GM12878 (cell line): ENCODE measurements at regions of chr4 and their contacts with region 1.

Region 1: GRCh38 chr4:185096032-185096653 is 46.9 kb upstream of the SLC25A4 start:
- DNase-seq: no peak
- ATAC-seq: peak; percentile 56; the same call in 2 of the 3 replicates
- H3K4me3 ChIP-seq: no peak overlapping the region
- H3K27ac ChIP-seq: no peak overlapping the region
- H3K4me1 ChIP-seq: no peaks in the 10 kb centered on the region
- H3K27me3 ChIP-seq: peaks cover 2 to 3% of the 10 kb centered on the region in 2 experiments; a peak in 1 of 4 replicates
- CTCF ChIP-seq: peak; percentile 34 to 54 (median 42); a peak in 5 of 6 replicates
- EP300 ChIP-seq: no peak
- POLR2A ChIP-seq: no peak
- RAD21 ChIP-seq: peak; percentile 74

Region 2: GRCh38 chr4:184983672-184984356 is 112.3 kb before region 1 on chr4:
- CTCF ChIA-PET with region 1: no interaction called
- POLR2A ChIA-PET with region 1: no interaction called
- RAD21 ChIA-PET with region 1: no interaction called
- SMC1A ChIA-PET with region 1: no interaction called
- in situ Hi-C with region 1: no loop called
- intact Hi-C with region 1: no loop called
- DNase-seq: peak; percentile 24
- ATAC-seq: peak; percentile 90
- H3K4me3 ChIP-seq: no peak overlapping the region
- H3K27ac ChIP-seq: no peak overlapping the region
- H3K4me1 ChIP-seq: 0 out of 2 replicates have a peak, but pooled peaks cover 4% of the 10 kb centered on the region
- H3K27me3 ChIP-seq: peaks cover 0 to 3% of the 10 kb centered on the region in 2 experiments; a peak in 3 of 4 replicates
- CTCF ChIP-seq: peak; percentile 44 to 62 (median 47)
- EP300 ChIP-seq: no peak
- POLR2A ChIP-seq: no peak
- RAD21 ChIP-seq: peak; percentile 87

Region 3: DNA sequence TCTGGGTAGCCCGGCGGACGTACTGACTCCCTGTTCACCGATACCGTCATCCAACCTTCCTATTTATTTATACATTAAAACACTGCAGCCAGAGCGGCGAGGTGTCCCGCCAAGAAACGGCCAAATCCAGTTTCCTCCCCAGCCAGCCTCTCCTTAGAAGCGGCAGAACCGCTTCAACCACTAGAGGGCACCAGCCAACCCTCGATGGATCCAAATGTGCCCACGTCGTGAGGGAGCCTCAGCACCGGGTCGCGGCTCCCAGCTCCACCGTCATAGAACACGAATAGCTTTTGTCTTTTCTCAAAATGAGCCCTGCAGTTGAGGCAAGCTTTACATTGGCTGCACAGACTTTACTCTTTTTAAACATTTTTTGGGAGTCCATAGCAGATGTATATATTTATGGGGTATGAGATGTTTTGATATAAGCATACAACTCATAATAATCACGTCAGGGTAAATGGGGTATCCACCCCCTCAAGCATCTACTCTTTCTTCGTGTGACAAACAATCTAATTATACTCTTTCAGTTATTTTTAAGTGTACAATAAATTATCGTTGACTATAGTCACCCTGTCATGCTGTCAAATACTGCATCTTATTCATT is 90.8 kb before region 1 on chr4:
- CTCF ChIA-PET with region 1: interaction called, 22 read pairs
- POLR2A ChIA-PET with region 1: no interaction called
- RAD21 ChIA-PET with region 1: interaction called, 18 read pairs
- SMC1A ChIA-PET with region 1: interaction called, 8 read pairs
- in situ Hi-C with region 1: no loop called
- intact Hi-C with region 1: loop called (anchors 2 kb)
- DNase-seq: peak; percentile 8
- ATAC-seq: peak; percentile 99
- H3K4me3 ChIP-seq: no peak overlapping the region
- H3K27ac ChIP-seq: no peak overlapping the region
- H3K4me1 ChIP-seq: no peaks in the 10 kb centered on the region
- H3K27me3 ChIP-seq: peaks cover 3 to 5% of the 10 kb centered on the region in 2 experiments; a peak in 2 of 4 replicates
- CTCF ChIP-seq: peak; percentile 89 to 94 (median 94)
- EP300 ChIP-seq: no peak
- POLR2A ChIP-seq: no peak
- RAD21 ChIP-seq: peak; percentile 87

Region 4: GRCh38 chr4:185033950-185034349 is 62.2 kb before region 1 on chr4:
- CTCF ChIA-PET with region 1: interaction called, 14 read pairs
- POLR2A ChIA-PET with region 1: no interaction called
- RAD21 ChIA-PET with region 1: interaction called, 3 read pairs
- SMC1A ChIA-PET with region 1: interaction called, 5 read pairs
- in situ Hi-C with region 1: no loop called
- intact Hi-C with region 1: loop called (anchors 2 kb)
- DNase-seq: peak; percentile 9
- ATAC-seq: peak; percentile 82
- H3K4me3 ChIP-seq: no peak overlapping the region
- H3K27ac ChIP-seq: no peak overlapping the region
- H3K4me1 ChIP-seq: no peaks in the 10 kb centered on the region
- H3K27me3 ChIP-seq: no peaks in the 10 kb centered on the region; a peak in 2 of 4 replicates
- CTCF ChIP-seq: no peak
- EP300 ChIP-seq: no peak
- POLR2A ChIP-seq: no peak
- RAD21 ChIP-seq: no peak

Region 5: GRCh38 chr4:185082561-185082960 is 13.6 kb before region 1 on chr4:
- CTCF ChIA-PET with region 1: interaction called, 13 read pairs
- POLR2A ChIA-PET with region 1: no interaction called
- RAD21 ChIA-PET with region 1: interaction called, 3 read pairs
- SMC1A ChIA-PET with region 1: interaction called, 7 read pairs
- in situ Hi-C with region 1: no loop called
- intact Hi-C with region 1: no loop called
- DNase-seq: no peak
- ATAC-seq: no peak
- H3K4me3 ChIP-seq: no peak overlapping the region
- H3K27ac ChIP-seq: no peak overlapping the region
- H3K4me1 ChIP-seq: no peaks in the 10 kb centered on the region
- H3K27me3 ChIP-seq: peaks cover 0 to 8% of the 10 kb centered on the region in 2 experiments; a peak in 1 of 4 replicates
- CTCF ChIP-seq: no peak
- EP300 ChIP-seq: no peak
- POLR2A ChIP-seq: no peak
- RAD21 ChIP-seq: no peak

Region 6: DNA sequence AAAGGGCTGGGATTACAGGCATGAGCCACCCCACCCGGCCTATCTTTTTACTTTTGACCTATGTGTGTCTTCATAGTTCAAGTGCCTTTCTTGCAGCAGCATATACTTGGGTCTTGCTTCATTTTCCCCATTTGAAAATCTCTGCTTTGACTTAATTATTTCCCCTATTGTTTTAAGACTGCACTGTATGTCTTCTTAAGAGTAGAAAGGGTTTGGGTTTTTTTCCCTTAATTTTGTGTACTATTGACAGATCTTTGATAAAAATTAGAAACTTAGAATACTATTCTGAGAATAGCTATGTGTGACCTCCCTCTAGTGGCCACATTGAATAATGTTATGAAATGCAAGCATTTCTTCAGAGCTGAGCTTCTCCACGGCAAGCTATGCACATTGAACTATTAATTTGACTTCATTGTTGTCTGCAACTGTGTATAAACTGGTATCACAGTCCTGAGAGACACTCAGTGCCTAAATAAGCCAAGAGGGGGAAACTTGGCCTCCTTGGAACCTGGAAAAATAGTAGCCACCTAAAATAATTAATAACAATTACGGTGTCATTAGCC is 38.2 kb after region 1 on chr4:
- CTCF ChIA-PET with region 1: interaction called, 13 read pairs
- POLR2A ChIA-PET with region 1: no interaction called
- RAD21 ChIA-PET with region 1: interaction called, 9 read pairs
- SMC1A ChIA-PET with region 1: interaction called, 10 read pairs
- in situ Hi-C with region 1: no loop called
- intact Hi-C with region 1: no loop called
- DNase-seq: no peak
- ATAC-seq: peak; percentile 91
- H3K4me3 ChIP-seq: no peak overlapping the region
- H3K27ac ChIP-seq: no peak overlapping the region
- H3K4me1 ChIP-seq: no peaks in the 10 kb centered on the region
- H3K27me3 ChIP-seq: no peaks in the 10 kb centered on the region; a peak in 1 of 4 replicates
- CTCF ChIP-seq: peak; percentile 69 to 83 (median 81)
- EP300 ChIP-seq: no peak
- POLR2A ChIP-seq: no peak
- RAD21 ChIP-seq: peak; percentile 79

Region 7: DNA sequence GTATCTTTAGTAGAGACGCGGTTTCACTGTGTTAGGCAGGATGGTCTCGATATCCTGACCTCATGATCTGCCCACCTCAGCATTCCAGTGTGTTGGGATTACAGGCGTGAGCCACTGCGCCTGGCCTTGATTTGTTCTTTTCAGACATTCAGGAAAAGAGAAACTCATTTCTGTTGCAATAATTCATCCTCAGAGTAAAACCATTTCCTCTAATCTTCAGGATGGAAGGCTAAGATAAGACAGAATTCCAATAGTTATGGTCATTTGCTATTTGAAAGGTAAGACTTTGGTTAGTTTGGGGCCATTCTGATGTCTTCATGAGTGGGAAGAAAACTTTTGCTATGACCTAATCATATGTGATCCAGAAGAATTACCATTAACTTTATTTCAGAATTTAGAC is 216.6 kb after region 1 on chr4:
- CTCF ChIA-PET with region 1: no interaction called
- POLR2A ChIA-PET with region 1: no interaction called
- RAD21 ChIA-PET with region 1: no interaction called
- SMC1A ChIA-PET with region 1: no interaction called
- in situ Hi-C with region 1: no loop called
- intact Hi-C with region 1: no loop called
- DNase-seq: no peak
- ATAC-seq: no peak
- H3K4me3 ChIP-seq: no peak overlapping the region
- H3K27ac ChIP-seq: no peak overlapping the region; the same call in 1 of the 2 replicates
- H3K4me1 ChIP-seq: peaks cover 42% of the 10 kb centered on the region
- H3K27me3 ChIP-seq: no peaks in the 10 kb centered on the region
- CTCF ChIP-seq: no peak
- EP300 ChIP-seq: no peak
- POLR2A ChIP-seq: no peak
- RAD21 ChIP-seq: no peak